Activated CD4-positive, alpha-beta memory T cell treated with anti-CD3 and anti-CD28 coated beads for 36 hours (primary cell): ENCODE measurements at regions of chr9 and their contacts with region 1.

Region 1: DNA sequence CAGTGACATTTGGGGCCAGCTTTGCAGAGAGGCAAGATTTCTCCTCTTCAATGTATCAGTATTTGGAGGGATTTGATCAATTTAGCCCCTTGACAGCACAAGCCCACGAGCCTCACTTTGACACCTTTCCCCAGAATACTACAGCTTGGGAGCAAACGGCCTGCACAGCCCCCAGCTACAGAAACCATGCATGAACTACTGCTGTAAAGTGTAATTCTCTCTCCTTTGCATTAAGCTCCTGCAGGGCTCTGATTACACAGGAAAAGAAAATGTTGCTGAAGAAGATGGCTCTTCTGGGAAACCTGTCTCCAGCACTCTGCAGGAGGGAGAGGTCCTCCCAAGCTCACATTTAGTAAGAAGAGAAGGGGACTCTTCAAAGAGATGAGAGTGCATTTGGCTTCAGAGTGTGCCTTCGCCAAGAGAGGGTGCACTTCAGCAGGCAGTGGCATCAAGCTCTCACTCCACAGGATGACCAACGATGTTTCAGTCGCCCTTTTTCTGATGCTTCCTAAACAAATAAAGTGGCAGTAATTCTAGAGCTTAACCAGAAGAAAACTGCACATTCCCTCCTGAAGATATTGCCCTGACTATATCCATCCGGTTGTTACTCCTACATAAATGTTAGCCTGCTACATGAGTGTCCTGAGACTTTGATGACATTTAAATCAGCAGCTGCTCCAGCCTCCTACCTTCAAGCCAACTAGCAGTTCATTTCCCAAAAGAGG is 272.2 kb downstream of the AUH start:
- DNase-seq: peak; percentile 45
- H3K4me3 Mint-ChIP-seq: no peak overlapping the region
- H3K27ac Mint-ChIP-seq: peak overlapping the region; percentile 35
- H3K4me1 Mint-ChIP-seq: peaks cover 40% of the 10 kb centered on the region
- H3K27me3 Mint-ChIP-seq: no peaks in the 10 kb centered on the region

Region 2: GRCh38 chr9:91056917-91057316 is 32.6 kb before region 1 on chr9:
- CTCF ChIA-PET with region 1: no interaction called
- POLR2A ChIA-PET with region 1: no interaction called
- intact Hi-C with region 1: loop called (anchors 1 kb)
- DNase-seq: no peak
- H3K4me3 Mint-ChIP-seq: no peak overlapping the region
- H3K27ac Mint-ChIP-seq: no peak overlapping the region
- H3K4me1 Mint-ChIP-seq: peaks cover 68% of the 10 kb centered on the region
- H3K27me3 Mint-ChIP-seq: peaks cover 12% of the 10 kb centered on the region